ENCODE measurements at regions of chr3 and their contacts with region 1.

Region 1: DNA sequence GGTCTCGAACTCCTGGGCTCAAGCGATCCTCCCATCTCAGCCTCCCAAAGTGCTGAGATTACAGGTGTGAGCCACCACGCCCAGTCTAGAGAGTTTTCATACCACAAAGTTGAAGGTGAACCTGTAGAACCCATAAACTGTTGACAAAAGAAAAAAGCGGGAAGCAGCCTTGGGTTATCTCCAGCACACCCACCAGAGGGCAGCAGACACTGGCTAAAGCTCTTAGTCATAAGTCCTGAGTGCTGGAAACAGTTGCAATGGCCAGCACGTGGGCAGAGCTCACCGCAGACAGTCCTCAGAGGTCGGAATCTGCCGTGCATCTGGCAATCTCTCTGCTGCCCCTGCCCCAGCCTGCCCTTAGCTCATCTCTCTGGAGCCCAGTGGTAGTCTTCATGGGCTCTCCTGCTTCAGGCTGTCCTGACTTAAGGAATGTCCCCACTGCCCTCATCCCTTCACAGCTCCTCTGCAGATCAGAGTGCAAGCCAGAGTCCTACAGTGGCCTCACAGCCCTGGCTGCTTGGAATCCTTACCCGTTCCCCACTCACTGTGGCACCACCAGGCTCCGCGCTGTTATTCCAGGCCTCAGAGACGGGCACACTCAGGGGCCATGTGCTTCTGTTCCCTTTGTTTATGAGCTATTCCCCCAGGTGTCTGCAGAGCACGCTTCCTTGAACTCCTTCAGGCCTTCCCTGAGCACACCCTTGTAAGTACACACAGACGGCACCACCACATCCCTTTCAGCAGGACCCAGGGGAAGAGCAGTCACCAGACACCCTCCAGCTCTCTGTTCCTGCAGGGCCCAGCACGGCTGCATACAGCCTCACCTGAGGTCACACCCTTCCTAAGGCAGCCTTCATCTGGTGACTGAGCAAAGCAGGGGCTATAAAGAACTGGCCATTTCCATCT is 8.8 kb upstream of the ELP6 start:
- DNase-seq: peak; percentile 91
- ATAC-seq: peak; percentile 97

Region 2: DNA sequence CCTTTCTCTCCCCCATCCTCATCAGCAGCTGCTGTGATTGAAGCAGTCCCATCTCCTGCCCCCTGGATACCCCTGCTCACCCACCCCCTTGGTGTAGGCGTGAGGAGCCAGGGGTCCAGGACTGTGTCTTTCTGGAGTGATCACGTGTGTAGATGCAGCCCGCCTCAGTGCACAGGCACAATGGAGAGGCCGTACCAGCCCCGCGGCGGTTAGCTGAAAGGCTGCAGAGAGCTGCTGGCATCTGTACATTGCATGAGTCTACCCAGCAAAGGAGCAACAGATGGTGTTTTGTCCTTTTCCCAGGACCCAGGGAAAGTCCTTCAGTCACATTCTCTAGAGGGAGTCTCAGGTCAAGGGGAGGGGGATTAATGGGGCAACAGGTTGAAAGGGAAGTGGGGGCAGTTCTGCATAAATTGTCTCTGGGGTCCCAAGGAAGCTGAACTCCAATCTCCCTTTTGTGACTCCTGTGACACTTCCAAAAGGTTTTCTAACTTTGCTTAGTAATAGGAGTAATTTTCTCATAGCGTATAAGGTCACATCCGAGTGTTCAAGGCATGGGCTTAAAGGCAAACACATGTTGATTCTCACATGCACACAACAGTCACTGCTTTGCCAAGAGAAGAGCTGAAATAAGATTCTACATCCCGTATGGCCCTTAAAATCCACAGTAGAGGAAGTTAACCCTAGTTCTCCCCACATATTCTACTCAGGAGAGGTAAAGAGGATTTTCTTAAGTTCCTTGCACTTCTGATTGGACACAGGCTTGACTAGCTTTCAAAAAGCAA is 49.2 kb after region 1 on chr3:
- intact Hi-C with region 1: no loop called
- DNase-seq: no peak
- ATAC-seq: no peak

Region 3: DNA sequence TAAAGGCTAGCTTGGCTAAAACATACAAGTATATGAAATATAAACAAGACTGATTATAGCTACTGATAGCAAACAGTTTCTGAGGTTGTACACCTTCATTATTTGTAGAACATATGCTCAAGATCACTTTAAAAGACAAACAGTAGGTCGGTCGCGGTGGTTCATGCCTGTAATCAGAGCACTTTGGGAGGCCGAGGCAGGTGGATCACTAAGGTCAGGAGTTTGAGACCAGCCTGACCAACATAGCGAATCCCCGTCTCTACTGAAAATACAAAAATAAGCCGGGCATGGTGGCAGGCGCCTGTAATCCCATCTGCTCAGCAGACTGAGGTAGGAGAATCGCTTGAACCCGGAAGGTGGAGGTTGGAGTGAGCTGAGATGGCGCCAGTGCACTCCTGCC is 179.1 kb after region 1 on chr3:
- intact Hi-C with region 1: no loop called
- DNase-seq: no peak
- ATAC-seq: no peak

Region 4: DNA sequence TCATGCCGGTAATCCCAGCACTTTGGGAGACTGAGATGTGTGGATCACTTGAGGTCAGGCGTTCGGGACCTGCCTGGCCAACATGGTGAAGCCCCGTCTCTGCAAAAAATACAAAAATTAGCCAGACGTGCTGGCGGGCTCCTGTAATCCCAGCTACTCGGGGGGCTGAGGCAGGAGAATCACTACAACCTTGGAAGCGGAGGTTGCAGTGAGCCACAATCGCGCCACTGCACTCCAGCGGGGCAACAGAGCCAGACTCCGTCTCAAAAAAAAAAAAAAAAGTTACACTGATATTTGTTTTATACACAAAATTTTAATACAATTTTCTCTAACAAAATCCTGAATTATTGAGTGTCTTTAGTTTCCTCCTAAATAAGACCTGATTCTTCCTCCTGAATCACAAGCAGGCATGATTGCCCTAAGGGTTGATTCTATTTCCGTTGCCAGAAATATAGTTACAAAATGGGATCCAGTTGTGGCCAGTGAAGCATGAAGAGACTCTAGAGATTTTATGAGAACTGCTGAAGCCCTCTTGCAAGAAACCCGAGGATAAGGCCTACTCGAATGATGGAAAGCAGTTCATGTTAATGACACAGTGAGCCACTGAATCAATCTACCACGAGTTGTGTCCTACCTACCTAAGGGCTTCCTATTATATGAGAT is 269.0 kb after region 1 on chr3:
- intact Hi-C with region 1: loop called (anchors 5 kb)
- DNase-seq: no peak
- ATAC-seq: no peak

Region 5: DNA sequence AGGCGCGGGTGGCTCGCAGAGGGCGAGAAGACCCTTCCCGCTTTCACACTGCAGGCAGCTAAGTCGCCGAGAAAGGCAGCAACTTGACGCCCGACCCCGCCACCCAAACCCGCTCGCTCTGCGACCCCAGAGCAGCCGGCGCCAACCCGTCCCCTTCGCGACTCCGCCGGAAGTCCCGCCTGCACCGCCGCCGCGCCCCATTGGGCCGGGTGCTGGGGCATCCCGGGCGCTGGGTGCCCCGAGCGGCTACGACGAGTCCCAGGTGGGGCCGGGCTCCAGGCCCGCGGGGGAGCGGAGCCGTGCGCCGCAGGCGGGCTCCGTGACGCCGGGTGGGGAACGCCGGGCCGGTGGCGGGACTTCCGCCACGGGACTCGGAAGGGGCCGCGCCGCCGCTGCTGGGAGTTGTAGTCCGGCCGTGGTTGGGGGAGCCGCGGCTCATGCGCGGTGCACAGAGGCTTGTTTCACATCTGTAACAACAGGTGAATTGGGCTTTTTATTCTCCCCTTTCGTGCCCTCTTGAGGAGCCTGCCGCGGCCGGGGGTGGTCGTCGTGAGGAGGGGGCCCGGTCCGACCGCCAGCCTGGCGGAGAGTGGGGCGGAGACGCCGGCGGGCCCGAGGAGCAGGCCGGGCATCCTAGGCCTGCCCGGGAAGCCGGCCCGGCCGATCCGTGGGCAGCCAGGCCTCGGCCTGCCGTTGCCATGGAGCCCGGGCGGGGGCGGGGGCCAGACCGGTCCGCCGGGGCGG is 280.6 kb after region 1 on chr3 and contains the start of gene DHX30:
- intact Hi-C with region 1: no loop called
- DNase-seq: peak; percentile 92
- ATAC-seq: peak; percentile 94
- total RNA-seq, gene DHX30: 57.2 TPM

Region 6: GRCh38 chr3:48130321-48130904 is 608.1 kb after region 1 on chr3:
- intact Hi-C with region 1: no loop called
- DNase-seq: peak; percentile 84
- ATAC-seq: peak; percentile 96

Measured in sciatic nerve (tissue), 2 donors.